ENCODE measurements at regions of chr18 and their contacts with region 1.

Region 1: GRCh38 chr18:293536-293935 is 25.7 kb upstream of the THOC1 start:
- DNase-seq: no peak
- ATAC-seq: no peak
- H3K4me3 ChIP-seq: no peak overlapping the region
- H3K27ac ChIP-seq: no peak overlapping the region
- H3K4me1 ChIP-seq: peaks cover 0 to 6% of the 10 kb centered on the region in 2 experiments; a peak in 3 of 5 replicates
- H3K27me3 ChIP-seq: peaks cover 12 to 24% of the 10 kb centered on the region in 2 experiments; a peak in 4 of 5 replicates
- CTCF ChIP-seq: peak in 1 of 3 experiments; percentile 19; a peak in 1 of 6 replicates
- EP300 ChIP-seq: no peak
- POLR2A ChIP-seq: no peak
- RAD21 ChIP-seq: peak in 1 of 2 experiments; percentile 49; a peak in 3 of 4 replicates

Region 2: GRCh38 chr18:228586-228985 is 65.0 kb before region 1 on chr18:
- CTCF ChIA-PET with region 1: no interaction called
- POLR2A ChIA-PET with region 1: no interaction called
- in situ Hi-C with region 1: no loop called
- intact Hi-C with region 1: no loop called
- DNase-seq: no peak
- ATAC-seq: no peak
- H3K4me3 ChIP-seq: no peak overlapping the region
- H3K27ac ChIP-seq: no peak overlapping the region
- H3K4me1 ChIP-seq: no peaks in the 10 kb centered on the region
- H3K27me3 ChIP-seq: no peaks in the 10 kb centered on the region
- CTCF ChIP-seq: no peak
- EP300 ChIP-seq: no peak
- POLR2A ChIP-seq: no peak
- RAD21 ChIP-seq: no peak

Region 3: DNA sequence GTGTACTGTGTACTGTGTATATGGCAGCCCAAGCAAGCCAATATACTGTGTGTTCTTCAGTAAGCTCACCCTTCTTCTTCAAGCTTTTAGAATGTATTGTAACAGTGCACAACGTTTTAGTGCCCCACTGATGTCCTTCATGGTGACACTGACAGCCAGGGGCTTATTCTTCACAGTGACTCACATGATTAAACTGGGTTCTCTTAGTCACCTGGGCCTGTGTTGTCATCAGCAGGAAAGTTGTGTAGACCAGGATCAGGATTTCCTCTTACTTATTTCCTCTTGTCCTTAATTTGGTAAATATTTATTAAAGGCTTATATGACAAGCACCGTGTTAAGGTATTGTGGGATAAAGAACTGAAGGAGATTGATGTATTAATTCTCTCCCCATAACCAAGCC is 42.2 kb after region 1 on chr18:
- CTCF ChIA-PET with region 1: no interaction called
- POLR2A ChIA-PET with region 1: no interaction called
- in situ Hi-C with region 1: no loop called
- intact Hi-C with region 1: loop called (anchors 5 kb)
- DNase-seq: no peak
- ATAC-seq: 0 out of 3 replicates have a peak, but pooled peaks have one; percentile 31
- H3K4me3 ChIP-seq: no peak overlapping the region
- H3K27ac ChIP-seq: no peak overlapping the region
- H3K4me1 ChIP-seq: no peaks in the 10 kb centered on the region; a peak in 1 of 5 replicates
- H3K27me3 ChIP-seq: peaks cover 61 to 71% of the 10 kb centered on the region in 2 experiments
- CTCF ChIP-seq: no peak
- EP300 ChIP-seq: no peak
- POLR2A ChIP-seq: no peak
- RAD21 ChIP-seq: no peak

Region 4: GRCh38 chr18:457140-457519 is 163.6 kb after region 1 on chr18:
- CTCF ChIA-PET with region 1: no interaction called
- POLR2A ChIA-PET with region 1: no interaction called
- in situ Hi-C with region 1: no loop called
- intact Hi-C with region 1: no loop called
- DNase-seq: no peak
- ATAC-seq: no peak
- H3K4me3 ChIP-seq: no peak overlapping the region
- H3K27ac ChIP-seq: no peak overlapping the region
- H3K4me1 ChIP-seq: no peaks in the 10 kb centered on the region
- H3K27me3 ChIP-seq: peaks cover 44 to 46% of the 10 kb centered on the region in 2 experiments
- CTCF ChIP-seq: no peak
- EP300 ChIP-seq: no peak
- POLR2A ChIP-seq: no peak
- RAD21 ChIP-seq: no peak

Region 5: GRCh38 chr18:468955-469790 is 175.6 kb after region 1 on chr18:
- CTCF ChIA-PET with region 1: no interaction called
- POLR2A ChIA-PET with region 1: no interaction called
- in situ Hi-C with region 1: no loop called
- intact Hi-C with region 1: loop called (anchors 5 kb)
- DNase-seq: no peak
- ATAC-seq: no peak
- H3K4me3 ChIP-seq: no peak overlapping the region
- H3K27ac ChIP-seq: no peak overlapping the region
- H3K4me1 ChIP-seq: no peaks in the 10 kb centered on the region
- H3K27me3 ChIP-seq: peaks cover 22 to 25% of the 10 kb centered on the region in 2 experiments
- CTCF ChIP-seq: no peak
- EP300 ChIP-seq: no peak
- POLR2A ChIP-seq: no peak
- RAD21 ChIP-seq: no peak

Measured in K562 (cell line).